Thyroid gland (tissue), 4 donors: ENCODE measurements at regions of chr21 and their contacts with region 1.

Region 1: DNA sequence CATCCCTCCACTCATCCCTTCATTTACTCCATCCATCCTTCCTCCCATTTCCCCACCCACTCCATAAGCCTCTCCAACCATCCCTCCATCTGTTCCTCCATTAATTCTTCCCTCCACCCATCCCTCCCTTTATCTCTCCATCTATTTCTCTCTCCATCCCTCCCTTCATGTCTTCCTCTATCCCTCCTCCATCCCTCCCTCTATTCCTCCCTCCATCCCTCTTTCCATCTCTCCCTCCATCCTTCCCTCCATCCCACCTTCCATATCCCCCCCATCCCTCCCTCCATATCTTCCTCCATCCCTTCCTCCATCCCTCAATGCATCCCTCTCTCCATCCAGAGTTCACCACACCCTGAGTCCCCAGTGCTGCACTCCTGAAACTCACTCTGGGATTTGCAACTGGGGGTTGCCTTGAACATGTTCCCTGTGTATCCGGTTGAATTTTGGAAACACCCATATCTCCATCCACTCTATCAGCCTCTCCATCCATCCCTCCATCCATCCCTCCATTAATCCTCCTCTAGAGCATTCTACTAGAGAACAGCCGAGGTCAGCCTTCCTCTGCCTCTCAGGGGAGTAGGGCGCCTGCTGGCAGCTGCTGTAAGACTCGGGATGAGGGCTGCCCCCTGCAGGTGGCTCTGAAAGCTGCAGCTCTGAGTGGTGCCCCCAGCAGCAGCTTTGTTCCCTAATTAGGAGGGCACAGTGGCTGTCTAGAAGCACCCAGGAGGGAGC is 39.4 kb downstream of the ABCG1 start:
- DNase-seq: peak; percentile 70
- H3K4me3 ChIP-seq: no peak overlapping the region
- H3K27ac ChIP-seq: no peak overlapping the region
- H3K4me1 ChIP-seq: peaks cover 3 to 35% of the 10 kb centered on the region in 2 donors
- H3K27me3 ChIP-seq: no peaks in the 10 kb centered on the region
- CTCF ChIP-seq: peak; percentile 59 to 77 (median 70)
- POLR2A ChIP-seq: no peak

Region 2: DNA sequence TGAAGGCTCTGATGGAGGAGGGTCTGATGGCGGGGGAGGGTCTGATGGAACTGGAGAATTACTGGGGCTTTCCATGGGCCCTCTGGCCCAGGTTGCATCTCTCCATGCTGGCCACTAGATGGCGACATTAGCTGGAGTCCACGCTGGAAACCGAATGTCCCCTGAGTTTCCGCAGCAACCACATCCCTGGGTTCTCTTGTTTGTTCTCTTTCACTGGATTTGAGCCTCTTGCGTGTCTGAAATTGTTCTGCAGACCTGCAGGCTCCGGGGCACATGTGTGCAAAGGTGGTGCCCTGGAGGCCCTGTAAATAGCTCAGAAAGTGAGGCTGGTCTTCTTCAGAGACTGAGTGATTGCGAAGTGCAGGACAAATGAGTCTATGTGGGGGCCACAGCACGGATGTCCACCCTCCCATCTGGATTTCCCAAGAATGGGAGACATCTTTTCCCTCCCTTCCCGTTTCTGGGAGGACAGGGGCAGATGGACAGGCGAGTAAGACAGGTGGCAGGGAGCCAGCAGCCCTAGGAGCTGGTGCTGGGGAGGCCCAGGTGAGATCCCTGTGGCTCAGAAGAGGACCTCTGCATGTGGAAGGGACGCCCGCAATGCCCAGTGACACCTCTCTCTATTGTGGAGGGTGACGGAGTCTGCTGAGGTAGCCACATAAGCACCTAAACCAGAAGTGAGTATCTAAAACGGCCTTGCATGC is 112.6 kb before region 1 on chr21:
- intact Hi-C with region 1: loop called (anchors 2 kb)
- DNase-seq: peak; percentile 47 to 57
- H3K4me3 ChIP-seq: no peak overlapping the region
- H3K27ac ChIP-seq: no peak overlapping the region
- H3K4me1 ChIP-seq: no peaks in the 10 kb centered on the region
- H3K27me3 ChIP-seq: no peaks in the 10 kb centered on the region
- CTCF ChIP-seq: peak; percentile 75 to 92 (median 89)
- POLR2A ChIP-seq: no peak